ENCODE measurements at regions of chr5 and their contacts with region 1.

Region 1: GRCh38 chr5:31232273-31232888 is 38.9 kb downstream of the CDH6 start:
- DNase-seq: peak; percentile 33
- H3K4me3 ChIP-seq: no peak overlapping the region
- H3K27ac ChIP-seq: no peak overlapping the region
- H3K27me3 ChIP-seq: no peaks in the 10 kb centered on the region
- CTCF ChIP-seq: peak; percentile 86

Region 2: GRCh38 chr5:30401479-30402058 is 830.8 kb before region 1 on chr5:
- CTCF ChIA-PET with region 1: interaction called, 50 read pairs
- POLR2A ChIA-PET with region 1: no interaction called
- DNase-seq: peak; percentile 7
- H3K4me3 ChIP-seq: no peak overlapping the region
- H3K27ac ChIP-seq: no peak overlapping the region
- H3K27me3 ChIP-seq: no peaks in the 10 kb centered on the region
- CTCF ChIP-seq: peak; percentile 66

Region 3: GRCh38 chr5:30804739-30805505 is 427.5 kb before region 1 on chr5:
- CTCF ChIA-PET with region 1: interaction called, 47 read pairs
- POLR2A ChIA-PET with region 1: no interaction called
- DNase-seq: peak; percentile 11
- H3K4me3 ChIP-seq: no peak overlapping the region
- H3K27ac ChIP-seq: no peak overlapping the region
- H3K27me3 ChIP-seq: no peaks in the 10 kb centered on the region
- CTCF ChIP-seq: peak; percentile 57

Region 4: DNA sequence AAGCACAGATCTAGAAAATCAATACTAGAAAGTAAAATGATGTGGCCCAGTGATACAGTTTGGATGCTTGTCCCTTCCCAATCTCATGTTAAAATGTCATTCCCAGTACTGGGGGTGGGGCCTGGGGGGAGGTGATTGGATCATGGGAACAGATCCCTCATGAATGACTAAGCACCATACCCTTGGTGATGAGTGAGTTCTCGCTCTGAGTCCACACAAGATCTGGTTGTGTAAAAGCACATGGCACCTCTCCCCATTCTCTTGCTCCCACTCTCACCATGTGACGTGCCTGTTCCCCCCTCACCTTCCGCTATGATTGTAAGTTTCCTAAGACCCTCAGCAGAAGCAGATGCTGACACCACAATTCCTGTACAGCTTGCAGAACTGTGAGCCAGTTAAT is 273.1 kb before region 1 on chr5:
- CTCF ChIA-PET with region 1: no interaction called
- POLR2A ChIA-PET with region 1: no interaction called
- DNase-seq: no peak
- H3K4me3 ChIP-seq: no peak overlapping the region
- H3K27ac ChIP-seq: no peak overlapping the region
- H3K27me3 ChIP-seq: no peaks in the 10 kb centered on the region
- CTCF ChIP-seq: no peak

Region 5: DNA sequence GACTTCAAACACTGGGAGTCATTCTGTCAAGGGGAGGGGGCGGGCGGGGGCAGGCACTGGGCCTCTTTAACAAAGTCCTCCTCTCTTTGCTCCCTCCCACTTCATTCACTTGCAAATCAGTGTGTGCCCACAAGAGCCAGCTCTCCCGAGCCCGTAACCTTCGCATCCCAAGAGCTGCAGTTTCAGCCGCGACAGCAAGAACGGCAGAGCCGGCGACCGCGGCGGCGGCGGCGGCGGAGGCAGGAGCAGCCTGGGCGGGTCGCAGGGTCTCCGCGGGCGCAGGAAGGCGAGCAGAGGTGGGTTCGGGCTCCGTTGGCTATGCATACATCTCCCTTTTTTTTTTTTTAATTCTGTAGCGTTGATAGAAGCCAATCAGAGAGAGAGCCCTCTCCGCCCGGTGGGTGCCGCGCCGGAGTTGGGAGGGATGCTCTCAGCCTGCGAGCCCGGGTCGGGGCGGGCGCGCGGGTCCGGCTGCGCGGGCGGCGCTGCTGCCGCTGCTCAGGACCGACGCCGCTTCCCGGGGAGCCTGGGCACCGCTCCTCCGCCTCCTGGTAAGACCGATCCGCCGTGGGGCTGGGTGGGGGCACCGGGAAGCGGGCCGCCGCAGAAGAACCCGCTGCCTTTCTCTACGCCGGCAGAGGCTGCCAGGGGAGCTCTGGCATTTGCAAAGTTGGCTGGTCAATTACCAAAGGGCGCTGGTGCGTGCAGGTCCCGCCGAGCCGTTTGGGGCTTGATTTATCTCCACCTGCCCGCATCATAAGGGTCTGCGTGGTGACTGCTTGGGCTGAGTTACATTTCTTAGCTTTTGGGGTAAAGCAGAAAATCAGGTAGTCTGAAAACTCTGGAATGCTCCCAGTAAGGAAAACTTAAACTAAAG is 38.6 kb before region 1 on chr5 and contains the start of gene CDH6:
- CTCF ChIA-PET with region 1: interaction called, 18 read pairs
- POLR2A ChIA-PET with region 1: no interaction called
- DNase-seq: peak; percentile 26
- H3K4me3 ChIP-seq: peak within 1 kb of the TSS; percentile 76
- H3K27ac ChIP-seq: peak within 1 kb of the TSS; percentile 40
- H3K27me3 ChIP-seq: no peaks in the 10 kb centered on the region
- CTCF ChIP-seq: no peak
- polyA plus RNA-seq, gene CDH6: 41.7 and 45.7 TPM in 2 replicates

Region 6: GRCh38 chr5:31218978-31219377 is 13.4 kb before region 1 on chr5:
- CTCF ChIA-PET with region 1: interaction called, 22 read pairs
- POLR2A ChIA-PET with region 1: no interaction called
- DNase-seq: no peak
- H3K4me3 ChIP-seq: no peak overlapping the region
- H3K27ac ChIP-seq: no peak overlapping the region
- H3K27me3 ChIP-seq: no peaks in the 10 kb centered on the region
- CTCF ChIP-seq: no peak

Region 7: GRCh38 chr5:31270396-31270795 is 38.0 kb after region 1 on chr5:
- CTCF ChIA-PET with region 1: interaction called, 23 read pairs
- POLR2A ChIA-PET with region 1: no interaction called
- DNase-seq: no peak
- H3K4me3 ChIP-seq: no peak overlapping the region
- H3K27ac ChIP-seq: no peak overlapping the region
- H3K27me3 ChIP-seq: no peaks in the 10 kb centered on the region
- CTCF ChIP-seq: peak; percentile 55

Region 8: GRCh38 chr5:31393126-31393525 is 160.7 kb after region 1 on chr5:
- CTCF ChIA-PET with region 1: no interaction called
- POLR2A ChIA-PET with region 1: no interaction called
- DNase-seq: no peak
- H3K4me3 ChIP-seq: no peak overlapping the region
- H3K27ac ChIP-seq: no peak overlapping the region
- H3K27me3 ChIP-seq: no peaks in the 10 kb centered on the region
- CTCF ChIP-seq: no peak

Region 9: GRCh38 chr5:31492869-31493268 is 260.5 kb after region 1 on chr5:
- CTCF ChIA-PET with region 1: interaction called, 20 read pairs
- POLR2A ChIA-PET with region 1: no interaction called
- DNase-seq: no peak
- H3K4me3 ChIP-seq: no peak overlapping the region
- H3K27ac ChIP-seq: no peak overlapping the region
- H3K27me3 ChIP-seq: no peaks in the 10 kb centered on the region
- CTCF ChIP-seq: no peak

Region 10: DNA sequence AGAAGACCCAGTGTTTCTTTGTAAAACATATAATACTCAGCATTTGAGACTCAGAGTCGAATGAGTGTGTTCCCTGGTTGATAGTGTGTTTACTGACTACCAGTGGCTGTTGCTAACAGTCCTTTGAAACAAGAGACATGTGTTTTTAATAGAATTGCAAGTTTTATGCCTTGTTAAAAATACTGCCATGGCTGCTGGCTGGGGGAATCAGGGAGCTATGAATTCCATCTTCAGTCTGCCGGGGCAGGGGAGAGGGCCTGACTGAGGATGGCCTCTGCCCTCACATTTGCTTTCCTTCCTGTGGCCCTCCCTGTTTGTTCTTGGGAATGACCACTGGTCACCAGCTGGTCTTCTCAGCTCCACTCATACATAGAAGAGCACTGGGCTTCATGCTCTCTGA is 470.3 kb after region 1 on chr5:
- CTCF ChIA-PET with region 1: no interaction called
- POLR2A ChIA-PET with region 1: no interaction called
- DNase-seq: no peak
- H3K4me3 ChIP-seq: no peak overlapping the region
- H3K27ac ChIP-seq: no peak overlapping the region
- H3K27me3 ChIP-seq: no peaks in the 10 kb centered on the region
- CTCF ChIP-seq: no peak

Region 11: GRCh38 chr5:32076699-32077695 is 844.6 kb after region 1 on chr5:
- CTCF ChIA-PET with region 1: no interaction called
- POLR2A ChIA-PET with region 1: no interaction called
- DNase-seq: peak; percentile 10
- H3K4me3 ChIP-seq: no peak overlapping the region
- H3K27ac ChIP-seq: no peak overlapping the region
- H3K27me3 ChIP-seq: peaks cover 9% of the 10 kb centered on the region
- CTCF ChIP-seq: peak; percentile 82